Heart right ventricle (tissue), 16 donors: ENCODE measurements at regions of chr4 and their contacts with region 1.

Region 1: GRCh38 chr4:174318829-174319764 is 35.4 kb downstream of the CEP44 start:
- DNase-seq: no peak
- ATAC-seq: no peak
- H3K4me3 ChIP-seq: no peak overlapping the region
- H3K27ac ChIP-seq: no peak overlapping the region
- H3K4me1 ChIP-seq: no peaks in the 10 kb centered on the region
- H3K27me3 ChIP-seq: no peaks in the 10 kb centered on the region
- CTCF ChIP-seq: peak; percentile 40 to 80 (median 74)

Region 2: GRCh38 chr4:173318648-173319211 is 1000.4 kb before region 1 on chr4:
- intact Hi-C with region 1: loop called in 1 of 10 experiments (anchors 10 kb)
- DNase-seq: no peak
- ATAC-seq: peak; percentile 28 to 83 (median 70)
- H3K4me3 ChIP-seq: no peak overlapping the region
- H3K27ac ChIP-seq: peak overlapping the region in 2 of 10 donors; percentile 47 to 67
- H3K4me1 ChIP-seq: peaks cover 0 to 18% (median 10%) of the 10 kb centered on the region in 9 donors
- H3K27me3 ChIP-seq: no peaks in the 10 kb centered on the region
- CTCF ChIP-seq: peak; percentile 20 to 73 (median 52)

Region 3: GRCh38 chr4:174120446-174121295 is 198.4 kb before region 1 on chr4:
- intact Hi-C with region 1: no loop called
- DNase-seq: peak; percentile 66 to 67
- ATAC-seq: peak; percentile 67 to 95 (median 83)
- H3K4me3 ChIP-seq: peak overlapping the region in 8 of 10 donors; percentile 17 to 54 (median 44)
- H3K27ac ChIP-seq: peak overlapping the region in 7 of 10 donors; percentile 5 to 65 (median 30)
- H3K4me1 ChIP-seq: peaks cover 0 to 31% (median 0%) of the 10 kb centered on the region in 9 donors
- H3K27me3 ChIP-seq: no peaks in the 10 kb centered on the region
- CTCF ChIP-seq: peak in 8 of 9 donors; percentile 22 to 60 (median 52)

Region 4: DNA sequence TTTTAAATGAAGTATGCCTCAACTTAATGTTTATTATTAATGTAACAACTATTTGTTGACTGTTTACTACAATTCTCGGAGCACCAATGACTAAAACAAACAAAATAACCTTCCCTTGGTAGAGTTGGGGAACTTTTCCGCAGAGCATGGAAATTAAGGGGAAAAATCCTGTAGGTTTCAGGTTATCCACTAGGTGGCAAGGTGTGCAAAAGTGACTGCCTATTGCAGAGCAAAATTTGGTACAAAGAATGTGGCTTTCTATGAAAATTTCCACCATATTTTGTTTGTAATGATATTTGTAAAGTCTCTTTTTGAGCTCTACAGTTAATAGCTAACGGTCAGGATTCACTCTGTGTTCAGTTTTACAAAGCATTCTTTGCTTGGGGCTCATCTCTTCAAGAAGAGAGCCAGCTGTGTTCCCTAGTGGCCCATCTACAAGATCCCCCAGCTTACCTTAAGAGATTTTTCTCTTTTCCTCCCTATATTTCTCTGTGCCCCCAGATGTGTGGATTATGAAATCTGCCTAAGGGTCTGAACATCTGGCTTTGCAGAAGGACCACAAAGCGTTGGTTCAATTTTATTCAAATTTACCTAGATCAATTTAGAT is 96.7 kb before region 1 on chr4:
- intact Hi-C with region 1: loop called in 7 of 10 experiments (anchors 2 to 10 kb)
- DNase-seq: no peak
- ATAC-seq: no peak
- H3K4me3 ChIP-seq: no peak overlapping the region
- H3K27ac ChIP-seq: no peak overlapping the region
- H3K4me1 ChIP-seq: peaks cover 0 to 13% (median 9%) of the 10 kb centered on the region in 9 donors
- H3K27me3 ChIP-seq: peaks cover 0 to 44% (median 16%) of the 10 kb centered on the region in 7 donors
- CTCF ChIP-seq: peak; percentile 24 to 66 (median 61)

Region 5: GRCh38 chr4:174236359-174236758 is 82.7 kb before region 1 on chr4:
- intact Hi-C with region 1: loop called in 1 of 10 experiments (anchors 10 kb)
- DNase-seq: no peak
- ATAC-seq: no peak
- H3K4me3 ChIP-seq: no peak overlapping the region
- H3K27ac ChIP-seq: no peak overlapping the region
- H3K4me1 ChIP-seq: peaks cover 0 to 4% (median 0%) of the 10 kb centered on the region in 9 donors
- H3K27me3 ChIP-seq: no peaks in the 10 kb centered on the region
- CTCF ChIP-seq: no peak